Astrocyte of the cerebellum (primary cell): ENCODE measurements at regions of chr4 and their contacts with region 1.

Region 1: DNA sequence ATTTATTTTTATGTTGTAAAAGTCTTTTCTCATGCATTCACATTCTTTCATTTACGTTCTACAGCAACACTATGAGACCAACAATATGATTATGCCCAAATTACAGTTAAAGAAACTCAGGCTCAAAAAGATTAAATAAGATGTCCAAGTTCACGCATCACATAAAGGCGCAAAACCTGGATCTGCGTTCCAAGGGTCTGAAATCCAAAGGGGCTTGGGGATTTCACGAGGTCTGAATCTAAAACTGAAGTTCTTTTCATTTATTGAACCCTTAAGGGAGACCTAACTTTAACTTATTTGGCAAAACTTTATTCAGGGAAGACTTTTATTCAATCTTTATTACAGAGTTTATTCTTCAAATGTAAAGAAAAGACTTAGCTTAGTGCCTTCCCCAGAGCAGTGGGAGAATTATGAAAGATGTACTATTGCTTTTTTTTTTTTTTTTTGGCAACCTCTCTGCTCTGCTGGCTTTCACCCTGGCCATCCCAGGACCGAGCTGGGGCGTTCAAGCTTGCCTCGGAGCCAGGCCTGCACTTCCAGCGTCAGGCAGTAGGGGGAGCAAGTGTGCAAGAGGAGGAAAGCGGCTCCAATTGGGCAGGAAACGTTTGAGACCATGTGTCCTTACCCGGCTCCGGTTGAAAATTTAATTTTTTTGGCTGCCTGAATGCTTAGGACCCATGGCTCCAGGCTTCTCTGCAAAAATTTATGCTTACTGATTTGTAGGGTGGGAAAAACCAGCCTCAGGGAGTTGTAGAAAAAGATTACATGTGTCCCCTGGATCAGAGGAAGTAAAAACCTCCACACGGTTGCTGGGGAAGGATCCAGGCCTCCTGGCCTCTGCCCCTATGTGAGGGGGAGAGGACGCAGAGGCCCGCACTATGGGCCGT is 344.3 kb upstream of the KLF3 start:
- DNase-seq: peak; percentile 88
- H3K4me3 ChIP-seq: no peak overlapping the region
- CTCF ChIP-seq: peak; percentile 100

Region 2: GRCh38 chr4:38078590-38079421 is 240.9 kb before region 1 on chr4:
- in situ Hi-C with region 1: loop called (anchors 25 kb)
- DNase-seq: peak; percentile 47
- H3K4me3 ChIP-seq: no peak overlapping the region
- CTCF ChIP-seq: no peak

Region 3: GRCh38 chr4:38360201-38360600 is 40.5 kb after region 1 on chr4:
- in situ Hi-C with region 1: no loop called
- DNase-seq: no peak
- H3K4me3 ChIP-seq: no peak overlapping the region
- CTCF ChIP-seq: no peak

Region 4: DNA sequence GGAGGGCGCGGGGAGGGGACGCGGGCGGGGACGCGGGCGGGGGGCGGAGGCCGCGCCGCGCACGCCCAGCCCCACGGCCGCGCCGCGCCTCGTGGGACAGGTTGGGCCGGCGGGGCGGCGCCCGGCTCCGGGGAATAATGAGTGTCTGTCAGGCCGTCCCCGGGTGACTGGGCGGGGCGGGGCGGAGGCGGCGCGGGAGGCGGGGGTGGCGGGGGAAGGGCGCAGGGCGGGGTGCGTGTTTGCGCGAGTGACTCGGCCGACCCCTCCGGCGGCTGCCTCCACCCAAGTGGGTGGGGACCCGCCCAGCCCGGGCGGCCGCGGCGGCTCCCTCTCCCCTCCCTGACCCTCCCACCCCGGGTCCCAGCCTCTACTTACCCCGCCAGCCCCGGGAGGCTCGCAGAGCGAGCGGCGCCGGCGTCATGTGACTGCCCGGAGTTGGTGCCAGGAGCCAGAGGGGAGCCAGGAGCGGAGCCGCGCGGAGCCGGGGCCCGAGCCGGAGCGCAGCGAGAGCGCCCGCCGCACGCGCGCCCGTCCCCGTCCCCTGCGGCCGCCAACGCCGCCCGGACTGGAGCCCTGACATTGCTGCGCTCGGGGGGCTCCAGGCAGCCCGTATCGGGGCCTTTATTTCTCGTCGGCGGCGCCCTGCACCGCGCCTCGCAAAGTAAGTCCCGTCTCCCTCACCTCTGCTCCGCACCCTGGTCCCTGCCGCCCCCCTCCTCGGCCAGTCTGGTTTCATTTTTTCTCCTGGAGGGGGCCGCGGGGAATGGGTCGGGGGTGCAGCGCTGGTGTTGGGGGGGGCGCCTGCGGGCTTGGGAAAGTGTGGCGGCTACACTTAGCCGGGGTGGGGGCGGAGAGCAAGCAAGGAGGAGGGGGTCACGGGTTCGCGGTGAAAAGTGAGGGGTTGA is 344.4 kb after region 1 on chr4 and contains the start of gene KLF3:
- in situ Hi-C with region 1: loop called (anchors 25 kb)
- DNase-seq: peak; percentile 75
- H3K4me3 ChIP-seq: peak within 1 kb of the TSS; percentile 81
- CTCF ChIP-seq: no peak

Region 5: DNA sequence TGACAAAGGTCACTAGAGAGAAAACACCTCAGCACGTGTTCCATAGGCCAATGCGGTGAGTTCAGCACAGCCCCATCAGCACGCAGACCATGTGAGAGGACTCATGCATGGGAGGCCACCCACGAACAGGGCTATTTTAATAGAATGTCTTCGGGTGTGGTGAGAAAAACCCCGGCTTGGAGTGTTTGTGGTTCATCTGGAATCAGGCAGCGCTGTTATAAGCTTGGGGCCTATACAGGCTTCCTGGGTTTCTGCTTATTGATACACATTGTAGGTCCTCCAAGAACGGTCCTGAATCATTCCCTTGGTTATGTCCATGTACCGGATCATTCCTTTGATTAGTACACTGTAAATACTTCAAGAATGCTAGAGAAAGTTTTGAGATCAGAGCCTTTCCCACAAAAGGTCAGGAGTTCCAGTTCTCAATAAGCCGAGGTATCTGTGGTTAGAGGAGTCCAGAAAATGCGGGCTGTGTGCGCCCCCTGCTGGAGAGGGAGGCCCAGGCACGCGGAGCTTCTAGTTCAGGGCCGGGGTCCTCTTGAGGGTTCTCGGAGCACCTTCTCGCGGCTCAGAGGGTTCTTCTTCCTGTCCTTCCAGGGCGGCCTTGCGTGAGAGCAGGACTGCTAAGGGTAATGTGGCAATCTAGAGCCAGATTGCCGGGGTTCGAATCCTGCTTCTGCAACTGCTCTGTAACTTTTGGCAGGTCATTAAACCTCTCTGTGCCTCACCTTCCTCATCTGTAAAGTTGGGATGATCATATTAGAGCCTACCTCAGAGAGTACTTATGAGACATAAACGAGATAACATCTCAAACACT is 411.3 kb after region 1 on chr4:
- in situ Hi-C with region 1: loop called (anchors 5 kb)
- DNase-seq: peak; percentile 96
- H3K4me3 ChIP-seq: no peak overlapping the region
- CTCF ChIP-seq: peak; percentile 96